Posterior vena cava (tissue), 2 donors: ENCODE measurements at regions of chr11 and their contacts with region 1.

Region 1: DNA sequence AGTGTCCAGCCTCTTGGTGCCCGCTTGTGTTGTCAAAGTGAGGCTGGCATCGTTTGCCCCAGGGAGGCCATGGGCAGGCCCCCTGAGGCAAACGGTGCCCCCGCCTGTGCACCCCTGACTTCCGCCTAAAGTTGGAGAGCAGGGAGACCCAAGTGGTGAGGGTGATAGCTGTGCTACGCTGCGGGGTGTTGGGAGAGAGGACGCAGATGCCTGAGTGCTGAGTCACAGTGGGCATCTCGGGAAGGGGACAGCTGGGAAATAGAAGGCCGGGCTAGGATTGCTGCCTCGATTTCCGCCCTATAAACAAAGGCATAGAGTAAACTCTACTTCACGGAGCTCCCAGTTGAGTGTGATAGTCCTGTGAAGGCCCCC is 5.8 kb downstream of the GRIK4 start:
- DNase-seq: peak; percentile 26

Region 2: DNA sequence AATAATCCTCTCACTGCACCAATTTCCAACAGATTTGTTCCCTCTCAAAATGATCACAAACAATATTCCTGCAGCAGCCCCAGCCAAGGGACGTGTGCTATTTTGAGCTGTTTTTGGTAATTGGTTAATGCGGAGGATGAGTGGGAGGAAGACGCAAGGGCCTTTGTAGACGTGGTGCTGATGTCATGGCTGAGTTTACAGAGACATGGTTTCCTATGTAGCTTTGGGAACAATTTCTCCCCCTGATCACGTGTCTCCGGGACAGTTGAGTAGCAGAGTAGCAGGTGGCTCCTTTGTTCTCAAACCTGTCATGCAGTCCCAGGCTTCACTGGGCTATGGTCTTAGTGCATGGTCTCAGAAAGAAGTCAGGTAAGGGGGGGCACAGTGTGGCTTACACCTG is 605.1 kb before region 1 on chr11:
- intact Hi-C with region 1: no loop called
- DNase-seq: no peak

Region 3: GRCh38 chr11:120543521-120544215 is 26.3 kb after region 1 on chr11:
- intact Hi-C with region 1: loop called in 1 of 2 experiments (anchors 1 kb)
- DNase-seq: no peak